Activated B cell treated with CpG ODN at 0.5 μM for 24 hours (primary cell): ENCODE measurements at regions of chr10 and their contacts with region 1.

Region 1: DNA sequence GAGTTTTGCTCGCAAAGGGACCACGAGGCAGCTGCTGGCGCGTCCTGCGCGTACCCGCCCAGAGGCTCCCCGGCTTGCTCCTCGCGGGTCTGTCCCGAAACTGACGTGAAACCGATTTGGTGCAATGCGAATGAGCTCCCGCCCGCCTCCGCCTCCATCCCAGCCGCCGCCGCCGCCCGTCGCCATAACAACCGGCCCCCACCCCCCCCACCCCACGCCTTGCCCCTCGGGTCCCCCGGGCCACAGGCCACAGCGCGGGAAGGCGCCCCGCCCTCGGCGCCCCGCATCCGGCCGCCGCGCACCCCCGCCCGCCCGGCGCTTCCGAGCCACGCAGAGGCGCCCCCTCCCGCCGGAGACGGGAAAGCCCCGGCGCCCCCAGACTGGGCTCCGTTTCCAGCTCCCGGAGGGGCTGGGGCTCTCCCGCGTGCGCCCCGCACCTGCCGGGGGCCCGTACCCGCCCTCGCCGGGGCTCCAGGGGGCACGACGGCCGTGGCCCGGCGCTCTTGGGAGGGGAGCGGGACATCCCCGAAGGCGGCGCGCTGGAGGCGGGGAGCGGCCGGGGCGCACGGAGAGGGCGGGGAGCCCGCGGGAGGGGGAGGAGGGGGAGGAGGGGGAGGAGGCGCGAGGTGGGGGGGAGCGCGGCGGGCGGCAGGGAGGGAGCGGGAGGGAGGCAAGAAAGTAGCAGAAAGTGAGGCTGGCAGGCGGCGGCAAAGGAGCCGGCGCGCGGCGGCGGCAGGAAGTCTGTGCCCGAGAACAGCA is at the start of gene CAMK1D:
- DNase-seq: peak; percentile 87
- ATAC-seq: peak; percentile 66
- H3K4me3 Mint-ChIP-seq: peak within 1 kb of the TSS; percentile 98
- H3K27ac Mint-ChIP-seq: peak within 1 kb of the TSS; percentile 98
- H3K4me1 Mint-ChIP-seq: peaks cover 61% of the 10 kb centered on the region
- H3K27me3 Mint-ChIP-seq: no peaks in the 10 kb centered on the region
- CTCF ChIP-seq: no peak
- total RNA-seq, gene CAMK1D: 51.7 and 58.8 TPM in 2 replicates

Region 2: GRCh38 chr10:12241810-12242529 is 107.1 kb before region 1 on chr10:
- CTCF ChIA-PET with region 1: no interaction called
- POLR2A ChIA-PET with region 1: interaction called, 7 read pairs
- intact Hi-C with region 1: loop called (anchors 2 kb)
- DNase-seq: no peak
- ATAC-seq: no peak
- H3K4me3 Mint-ChIP-seq: peak overlapping the region; percentile 29
- H3K27ac Mint-ChIP-seq: peak overlapping the region; percentile 75
- H3K4me1 Mint-ChIP-seq: peaks cover 69% of the 10 kb centered on the region
- H3K27me3 Mint-ChIP-seq: no peaks in the 10 kb centered on the region
- CTCF ChIP-seq: no peak

Region 3: DNA sequence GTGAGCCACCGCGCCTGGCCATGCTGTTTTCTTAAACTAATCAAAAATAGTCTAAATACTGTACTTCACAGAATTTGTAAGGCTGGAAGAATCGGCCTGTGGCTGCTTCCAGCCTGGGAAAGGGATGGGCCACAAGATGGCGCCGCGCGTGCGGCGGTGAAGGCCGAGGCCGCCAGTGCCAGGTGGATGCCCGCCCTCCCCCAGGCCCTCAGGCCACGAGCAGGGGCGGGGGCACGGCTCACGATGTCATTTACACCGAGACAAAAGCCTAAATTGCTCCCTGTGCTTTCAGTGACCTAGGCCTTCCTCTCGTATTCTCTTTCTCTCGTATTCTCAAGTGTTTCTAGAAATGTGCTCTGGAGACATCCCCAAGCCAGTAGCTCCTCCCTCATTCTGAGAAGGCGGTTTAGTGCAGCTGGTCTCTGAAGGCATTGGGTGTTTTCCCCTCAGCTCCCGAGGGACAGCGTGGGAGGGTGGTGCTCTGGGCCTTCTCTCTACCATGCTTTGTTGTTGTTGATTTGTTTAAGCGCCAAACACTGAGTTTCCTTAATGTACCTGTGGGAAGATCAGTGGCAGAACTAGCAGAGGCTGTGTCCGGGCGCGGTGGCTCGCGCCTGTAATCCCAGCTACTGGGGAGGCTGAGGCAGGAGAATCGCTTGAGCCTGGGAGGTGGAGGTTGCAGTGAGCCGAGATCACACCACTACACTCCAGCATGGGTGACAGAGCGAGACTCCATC is 84.7 kb before region 1 on chr10:
- CTCF ChIA-PET with region 1: interaction called, 8 read pairs
- POLR2A ChIA-PET with region 1: interaction called, 95 read pairs
- intact Hi-C with region 1: loop called (anchors 1 kb)
- DNase-seq: peak; percentile 86
- ATAC-seq: peak; percentile 87
- H3K4me3 Mint-ChIP-seq: peak overlapping the region; percentile 83
- H3K27ac Mint-ChIP-seq: peak overlapping the region; percentile 100
- H3K4me1 Mint-ChIP-seq: peaks cover 58% of the 10 kb centered on the region
- H3K27me3 Mint-ChIP-seq: no peaks in the 10 kb centered on the region
- CTCF ChIP-seq: no peak

Region 4: DNA sequence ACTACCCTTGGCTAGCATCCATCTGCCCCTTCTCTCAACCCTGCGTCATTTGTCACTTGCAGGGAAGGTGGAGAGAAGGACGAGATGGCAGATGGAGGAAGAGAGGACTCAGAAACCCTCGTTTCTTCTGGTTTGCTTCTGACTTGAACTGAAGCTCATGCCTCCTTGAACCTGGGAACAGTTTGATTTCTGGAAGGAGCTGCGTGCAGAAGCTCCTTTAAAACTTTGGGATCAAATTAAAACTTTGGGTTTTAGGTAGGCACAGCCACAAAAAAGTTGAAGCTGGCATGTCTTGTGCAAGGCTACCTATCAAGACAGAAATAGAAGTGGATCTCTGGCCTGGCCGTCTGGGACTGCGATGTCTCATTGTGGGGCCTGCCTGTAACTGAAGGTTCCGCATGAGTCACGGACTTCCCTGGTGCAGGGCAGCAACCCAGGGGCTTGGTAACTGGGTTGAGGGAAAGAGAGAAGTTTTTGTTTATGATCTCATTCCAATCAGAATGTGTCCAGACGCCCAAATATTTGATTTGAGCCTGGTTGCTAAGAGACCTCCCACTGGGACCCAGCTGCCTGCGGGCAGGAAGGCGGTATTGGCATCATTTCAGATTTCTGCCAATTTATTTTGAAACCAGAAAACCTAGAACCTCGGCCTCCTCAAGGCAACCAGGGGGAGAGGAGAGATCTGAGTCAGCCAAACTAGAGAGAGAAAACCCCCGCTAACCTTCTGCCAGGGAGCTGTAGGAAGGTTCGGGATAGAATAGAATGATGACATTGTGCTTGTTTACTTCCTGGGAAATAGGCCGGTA is 15.5 kb before region 1 on chr10:
- CTCF ChIA-PET with region 1: no interaction called
- POLR2A ChIA-PET with region 1: interaction called, 28 read pairs
- intact Hi-C with region 1: loop called (anchors 1 kb)
- DNase-seq: peak; percentile 37
- ATAC-seq: peak; percentile 95
- H3K4me3 Mint-ChIP-seq: peak overlapping the region; percentile 61
- H3K27ac Mint-ChIP-seq: peak overlapping the region; percentile 72
- H3K4me1 Mint-ChIP-seq: peaks cover 36% of the 10 kb centered on the region
- H3K27me3 Mint-ChIP-seq: no peaks in the 10 kb centered on the region
- CTCF ChIP-seq: no peak

Region 5: GRCh38 chr10:12369982-12370381 is 20.9 kb after region 1 on chr10:
- CTCF ChIA-PET with region 1: no interaction called
- POLR2A ChIA-PET with region 1: interaction called, 4 read pairs
- intact Hi-C with region 1: loop called (anchors 2 kb)
- DNase-seq: no peak
- ATAC-seq: no peak
- H3K4me3 Mint-ChIP-seq: no peak overlapping the region
- H3K27ac Mint-ChIP-seq: no peak overlapping the region
- H3K4me1 Mint-ChIP-seq: peaks cover 47% of the 10 kb centered on the region
- H3K27me3 Mint-ChIP-seq: no peaks in the 10 kb centered on the region
- CTCF ChIP-seq: no peak

Region 6: DNA sequence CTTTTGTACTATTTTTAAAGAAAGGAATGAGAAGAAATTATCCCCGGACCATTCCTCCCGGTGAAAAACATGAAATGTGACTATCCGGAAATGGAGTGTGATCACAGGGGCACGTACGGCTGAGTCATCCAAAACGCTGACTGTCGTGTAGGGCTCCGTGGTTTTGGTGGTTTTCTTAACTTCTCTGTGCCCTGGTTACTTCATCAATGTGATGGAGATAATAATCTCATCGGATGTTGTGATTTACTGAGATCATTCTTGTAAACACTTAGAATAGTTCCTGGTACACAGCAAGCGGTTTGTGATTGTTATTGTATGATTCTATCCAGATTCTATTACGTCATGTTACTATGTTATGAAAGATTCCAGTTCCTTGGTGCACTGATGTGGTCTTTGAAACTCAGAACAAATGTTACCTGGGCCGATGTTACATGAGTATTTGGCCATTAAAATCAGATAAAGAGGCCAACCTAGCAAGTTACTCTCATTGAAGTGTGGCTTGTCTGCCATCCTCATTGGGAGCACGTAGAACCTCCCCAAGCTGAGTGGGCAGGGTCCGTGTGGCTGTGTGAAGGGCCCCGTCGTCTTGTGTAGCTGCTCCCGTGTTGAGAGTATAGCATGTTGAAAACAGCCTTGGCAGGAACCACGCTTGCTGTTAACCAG is 99.8 kb after region 1 on chr10:
- CTCF ChIA-PET with region 1: no interaction called
- POLR2A ChIA-PET with region 1: no interaction called
- intact Hi-C with region 1: loop called (anchors 5 kb)
- DNase-seq: no peak
- ATAC-seq: peak; percentile 97
- H3K4me3 Mint-ChIP-seq: peak overlapping the region; percentile 67
- H3K27ac Mint-ChIP-seq: peak overlapping the region; percentile 77
- H3K4me1 Mint-ChIP-seq: peaks cover 66% of the 10 kb centered on the region
- H3K27me3 Mint-ChIP-seq: no peaks in the 10 kb centered on the region
- CTCF ChIP-seq: no peak

Region 7: DNA sequence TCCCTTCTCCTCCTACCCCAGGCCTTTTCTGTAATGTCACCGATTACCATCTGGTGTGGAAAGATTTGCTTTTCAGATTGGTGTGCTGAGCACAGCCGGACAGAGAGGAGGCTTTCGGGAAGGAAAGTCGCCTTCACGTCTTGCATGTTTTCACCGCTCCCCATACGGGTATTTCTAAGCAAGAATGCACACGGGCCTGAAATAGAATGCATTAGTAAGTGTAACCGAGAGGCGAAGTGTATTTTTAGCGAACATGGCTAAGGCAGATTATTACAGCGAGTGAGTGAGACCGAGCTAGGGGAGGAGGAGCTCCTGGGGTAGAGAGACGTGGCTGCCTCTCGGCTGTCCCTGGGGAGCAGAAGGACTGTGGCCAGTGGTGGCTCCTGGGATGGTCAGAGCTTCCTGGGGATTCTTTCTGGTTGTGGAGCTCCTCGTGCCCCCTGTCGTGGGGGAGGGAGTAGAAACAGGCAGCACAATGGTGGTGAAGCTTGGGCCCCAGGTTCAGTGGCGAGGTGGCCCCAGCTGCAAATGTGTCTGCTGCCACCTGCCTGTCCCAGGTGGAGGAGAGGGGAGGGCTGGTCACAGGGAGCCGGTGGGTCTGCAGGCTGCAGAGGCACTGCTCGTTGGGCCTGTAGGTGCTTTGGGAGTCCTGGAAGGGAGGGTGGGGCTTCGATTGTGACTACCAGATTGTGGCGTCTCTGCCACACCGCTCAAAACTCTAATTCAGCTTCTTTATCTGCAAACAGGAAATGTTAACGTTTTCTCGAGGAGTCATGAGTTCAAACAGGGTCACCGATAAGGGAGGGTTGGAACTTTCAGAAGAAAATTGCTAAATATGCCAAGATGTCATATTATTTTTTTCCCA is 136.1 kb after region 1 on chr10:
- CTCF ChIA-PET with region 1: interaction called, 3 read pairs
- POLR2A ChIA-PET with region 1: interaction called, 10 read pairs
- intact Hi-C with region 1: loop called (anchors 1 kb)
- DNase-seq: peak; percentile 29
- ATAC-seq: peak; percentile 73
- H3K4me3 Mint-ChIP-seq: peak overlapping the region; percentile 71
- H3K27ac Mint-ChIP-seq: peak overlapping the region; percentile 78
- H3K4me1 Mint-ChIP-seq: peaks cover 63% of the 10 kb centered on the region
- H3K27me3 Mint-ChIP-seq: no peaks in the 10 kb centered on the region
- CTCF ChIP-seq: no peak

Region 8: GRCh38 chr10:12531305-12532220 is 182.5 kb after region 1 on chr10:
- CTCF ChIA-PET with region 1: no interaction called
- POLR2A ChIA-PET with region 1: no interaction called
- intact Hi-C with region 1: no loop called
- DNase-seq: no peak
- ATAC-seq: no peak
- H3K4me3 Mint-ChIP-seq: no peak overlapping the region
- H3K27ac Mint-ChIP-seq: no peak overlapping the region
- H3K4me1 Mint-ChIP-seq: peaks cover 39% of the 10 kb centered on the region
- H3K27me3 Mint-ChIP-seq: no peaks in the 10 kb centered on the region
- CTCF ChIP-seq: no peak

Region 9: GRCh38 chr10:12549295-12549694 is 200.2 kb after region 1 on chr10:
- CTCF ChIA-PET with region 1: no interaction called
- POLR2A ChIA-PET with region 1: no interaction called
- intact Hi-C with region 1: no loop called
- DNase-seq: no peak
- ATAC-seq: no peak
- H3K4me3 Mint-ChIP-seq: no peak overlapping the region
- H3K27ac Mint-ChIP-seq: no peak overlapping the region
- H3K4me1 Mint-ChIP-seq: peaks cover 40% of the 10 kb centered on the region
- H3K27me3 Mint-ChIP-seq: no peaks in the 10 kb centered on the region
- CTCF ChIP-seq: no peak